ENCODE measurements at regions of chr12 and their contacts with region 1.

Region 1: GRCh38 chr12:52582971-52583456 is 9.4 kb upstream of the KRT74 start:
- DNase-seq: peak; percentile 52 to 64 (median 62)
- H3K4me3 ChIP-seq: no peak overlapping the region
- H3K4me3 Mint-ChIP-seq: peak overlapping the region in 2 of 8 donors; percentile 27 to 36
- H3K27ac ChIP-seq: no peak overlapping the region
- H3K27ac Mint-ChIP-seq: peak overlapping the region; percentile 8 to 95 (median 73)
- H3K4me1 ChIP-seq: peaks cover 25% of the 10 kb centered on the region
- H3K4me1 Mint-ChIP-seq: peaks cover 19 to 49% (median 27%) of the 10 kb centered on the region in 4 donors
- H3K27me3 ChIP-seq: no peaks in the 10 kb centered on the region
- H3K27me3 Mint-ChIP-seq: no peaks in the 10 kb centered on the region

Region 2: GRCh38 chr12:52156736-52157565 is 426.1 kb before region 1 on chr12:
- CTCF ChIA-PET with region 1: interaction called, 4 read pairs
- POLR2A ChIA-PET with region 1: no interaction called
- intact Hi-C with region 1: loop called (anchors 10 kb)
- DNase-seq: peak; percentile 67 to 73 (median 68)
- H3K4me3 ChIP-seq: no peak overlapping the region
- H3K4me3 Mint-ChIP-seq: peak overlapping the region in 1 of 8 donors; percentile 21
- H3K27ac ChIP-seq: no peak overlapping the region
- H3K27ac Mint-ChIP-seq: peak overlapping the region in 6 of 7 donors; percentile 48 to 98 (median 97)
- H3K4me1 ChIP-seq: peaks cover 60% of the 10 kb centered on the region
- H3K4me1 Mint-ChIP-seq: peaks cover 30 to 70% (median 41%) of the 10 kb centered on the region in 4 donors
- H3K27me3 ChIP-seq: no peaks in the 10 kb centered on the region
- H3K27me3 Mint-ChIP-seq: no peaks in the 10 kb centered on the region

Region 3: DNA sequence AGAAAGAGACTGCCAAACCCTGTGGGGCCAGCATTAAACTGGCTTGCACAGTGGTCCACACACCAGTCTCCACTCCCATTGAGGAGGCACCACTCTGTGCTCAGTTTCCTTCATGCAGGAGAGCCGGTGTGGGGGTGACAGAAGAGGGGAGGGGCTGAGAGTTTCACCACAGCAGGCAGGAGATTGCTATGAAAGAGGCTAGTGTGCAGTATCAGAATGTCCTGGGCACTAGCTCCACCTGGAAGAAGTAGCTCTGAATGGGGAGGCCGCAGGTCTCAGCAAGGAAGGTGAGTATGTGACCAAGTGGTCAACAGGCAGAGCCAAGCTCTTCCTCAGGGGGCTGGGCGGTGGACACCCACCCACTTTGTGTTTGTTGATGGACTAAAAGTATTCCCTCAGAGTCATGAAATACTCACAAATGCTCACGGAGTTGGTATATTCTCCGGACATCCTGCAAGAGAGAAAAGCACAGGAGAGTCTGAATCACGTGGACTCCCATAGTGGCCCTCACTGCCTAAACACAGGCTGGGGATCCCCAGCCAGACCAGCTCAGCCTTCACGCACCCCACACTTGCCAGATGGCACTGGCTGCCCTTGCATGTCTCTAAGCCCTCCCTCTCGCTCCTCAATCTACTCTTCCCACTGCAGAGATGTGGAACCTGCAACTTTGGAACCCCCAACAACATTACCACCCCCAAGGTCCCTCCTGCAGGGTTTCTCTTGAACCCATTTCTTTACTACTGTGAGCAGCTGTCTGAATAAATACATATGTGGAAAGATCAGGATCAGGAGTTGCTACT is 26.0 kb after region 1 on chr12:
- CTCF ChIA-PET with region 1: interaction called, 61 read pairs
- POLR2A ChIA-PET with region 1: interaction called, 54 read pairs
- intact Hi-C with region 1: loop called (anchors 1 kb)
- DNase-seq: no peak
- H3K4me3 ChIP-seq: no peak overlapping the region
- H3K4me3 Mint-ChIP-seq: peak overlapping the region in 3 of 8 donors; percentile 30 to 58 (median 39)
- H3K27ac ChIP-seq: no peak overlapping the region
- H3K27ac Mint-ChIP-seq: peak overlapping the region; percentile 69 to 96 (median 76)
- H3K4me1 ChIP-seq: peaks cover 69% of the 10 kb centered on the region
- H3K4me1 Mint-ChIP-seq: peaks cover 22 to 93% (median 65%) of the 10 kb centered on the region in 4 donors
- H3K27me3 ChIP-seq: no peaks in the 10 kb centered on the region
- H3K27me3 Mint-ChIP-seq: peaks cover 4 to 6% of the 10 kb centered on the region in 2 donors

Region 4: DNA sequence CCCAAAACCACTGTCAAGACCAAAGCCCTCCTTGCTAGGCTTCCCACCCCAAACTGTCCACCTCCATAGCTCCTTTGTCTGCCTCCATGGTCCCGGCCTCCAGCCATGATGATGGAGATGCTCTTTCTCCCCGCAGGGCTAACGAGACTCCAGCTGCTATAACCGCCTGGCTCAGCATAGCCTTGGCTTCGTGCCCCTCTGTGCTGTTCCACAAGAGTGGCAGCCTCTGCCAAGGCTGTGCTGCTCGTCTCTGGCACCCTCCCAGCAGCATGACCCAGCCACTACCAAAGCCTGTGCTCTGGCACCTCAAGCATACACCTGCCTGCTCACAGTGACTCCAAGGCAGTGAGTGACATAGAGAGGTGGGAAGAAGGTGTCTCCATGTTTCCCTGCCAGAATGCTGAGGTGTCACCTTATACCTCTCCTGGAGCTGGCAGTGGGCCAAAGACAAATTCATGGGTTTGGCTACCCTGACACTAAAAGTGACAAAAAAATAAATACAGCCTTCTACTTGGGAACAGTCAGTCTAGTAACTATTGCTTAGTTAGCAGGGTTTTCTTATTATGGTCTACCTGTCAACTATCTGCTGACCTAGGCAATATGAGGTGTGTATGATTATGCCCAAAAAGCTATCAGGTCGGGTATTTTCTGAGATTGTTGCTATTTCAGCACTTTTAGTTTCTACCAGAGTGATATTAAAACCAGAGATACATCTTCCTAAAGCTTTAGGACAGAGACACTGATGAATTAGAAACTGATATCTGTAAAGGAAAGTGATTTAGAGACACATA is 51.4 kb after region 1 on chr12:
- CTCF ChIA-PET with region 1: interaction called, 20 read pairs
- POLR2A ChIA-PET with region 1: no interaction called
- intact Hi-C with region 1: no loop called
- DNase-seq: no peak
- H3K4me3 ChIP-seq: no peak overlapping the region
- H3K4me3 Mint-ChIP-seq: peak overlapping the region in 1 of 8 donors; percentile 54
- H3K27ac ChIP-seq: no peak overlapping the region
- H3K27ac Mint-ChIP-seq: peak overlapping the region in 5 of 7 donors; percentile 28 to 85 (median 54)
- H3K4me1 ChIP-seq: peaks cover 21% of the 10 kb centered on the region
- H3K4me1 Mint-ChIP-seq: peaks cover 12 to 52% (median 33%) of the 10 kb centered on the region in 4 donors
- H3K27me3 ChIP-seq: no peaks in the 10 kb centered on the region
- H3K27me3 Mint-ChIP-seq: peaks cover 3% of the 10 kb centered on the region in 2 donors

Region 5: GRCh38 chr12:52870351-52871290 is 287.6 kb after region 1 on chr12:
- CTCF ChIA-PET with region 1: interaction called, 317 read pairs
- POLR2A ChIA-PET with region 1: interaction called, 4 read pairs
- intact Hi-C with region 1: no loop called
- DNase-seq: peak; percentile 66 to 76 (median 72)
- H3K4me3 ChIP-seq: no peak overlapping the region
- H3K4me3 Mint-ChIP-seq: peak overlapping the region in 3 of 8 donors; percentile 16 to 49 (median 22)
- H3K27ac ChIP-seq: no peak overlapping the region
- H3K27ac Mint-ChIP-seq: peak overlapping the region in 4 of 7 donors; percentile 27 to 85 (median 62)
- H3K4me1 ChIP-seq: peaks cover 21% of the 10 kb centered on the region
- H3K4me1 Mint-ChIP-seq: peaks cover 15 to 29% (median 24%) of the 10 kb centered on the region in 4 donors
- H3K27me3 ChIP-seq: no peaks in the 10 kb centered on the region
- H3K27me3 Mint-ChIP-seq: no peaks in the 10 kb centered on the region

Measured in CD4-positive, alpha-beta memory T cell (primary cell).